Adrenal gland (tissue), 19 donors: ENCODE measurements at regions of chr17 and their contacts with region 1.

Region 1: DNA sequence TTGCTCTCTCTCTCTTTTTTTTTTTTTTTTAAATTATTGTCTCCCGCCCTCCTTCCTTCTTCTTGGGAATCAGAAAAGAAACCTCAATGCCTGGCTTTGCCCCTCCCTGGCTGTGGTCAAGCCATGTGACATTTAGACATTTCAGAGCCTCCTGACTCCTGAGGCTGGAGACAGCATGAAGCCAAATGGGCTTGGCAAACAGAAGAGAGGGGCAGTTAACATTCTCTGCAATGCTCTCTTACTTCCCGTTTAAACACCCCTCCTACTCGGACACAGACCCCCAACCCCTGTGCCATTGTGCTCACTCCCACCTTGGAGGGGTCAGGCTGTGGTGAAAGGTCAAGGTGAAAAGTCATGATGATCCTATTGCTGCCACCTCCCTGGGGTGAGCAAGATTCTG is 14.7 kb upstream of the MEOX1 start:
- DNase-seq: no peak
- H3K4me3 ChIP-seq: no peak overlapping the region
- H3K27ac ChIP-seq: no peak overlapping the region
- H3K4me1 ChIP-seq: peaks cover 19 to 34% of the 10 kb centered on the region in 2 donors
- H3K27me3 ChIP-seq: no peaks in the 10 kb centered on the region
- CTCF ChIP-seq: no peak
- POLR2A ChIP-seq: no peak

Region 2: DNA sequence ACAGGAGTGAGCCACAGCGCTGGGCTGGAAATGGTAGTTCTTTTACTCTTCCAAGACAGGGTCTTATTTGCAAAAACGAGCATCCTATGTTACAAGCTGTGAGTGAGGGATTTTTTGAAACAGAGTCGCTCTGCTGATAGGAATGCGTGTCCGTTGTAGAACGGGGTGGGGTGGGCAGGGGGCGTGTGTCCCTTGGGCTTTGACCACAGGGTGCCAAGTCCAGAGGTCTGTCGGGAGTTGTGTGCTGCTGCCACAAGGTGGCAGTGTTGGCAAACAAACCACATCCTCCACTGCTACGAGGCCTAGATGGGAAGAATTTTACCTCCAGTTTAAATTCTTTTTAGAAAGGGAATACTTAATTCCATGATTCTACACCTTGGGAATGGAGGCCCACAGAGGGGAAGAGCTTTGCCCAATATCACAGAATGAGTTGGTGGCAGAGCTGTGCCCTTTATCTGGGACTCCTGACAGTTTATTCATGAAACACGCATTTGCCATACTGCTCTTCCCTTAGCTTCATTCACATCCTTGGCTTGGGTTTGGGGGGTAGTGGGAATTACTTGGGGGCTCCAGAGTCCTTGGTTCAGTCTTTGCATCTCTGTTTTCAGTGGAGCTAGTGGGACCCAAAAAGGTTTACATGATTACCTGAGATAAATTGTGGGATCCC is 99.8 kb before region 1 on chr17:
- intact Hi-C with region 1: loop called (anchors 2 kb)
- DNase-seq: peak; percentile 56 to 84 (median 72)
- H3K4me3 ChIP-seq: no peak overlapping the region
- H3K27ac ChIP-seq: no peak overlapping the region
- H3K4me1 ChIP-seq: peaks cover 0 to 9% of the 10 kb centered on the region in 2 donors
- H3K27me3 ChIP-seq: no peaks in the 10 kb centered on the region
- CTCF ChIP-seq: peak; percentile 85 to 95 (median 92)
- POLR2A ChIP-seq: no peak

Region 3: DNA sequence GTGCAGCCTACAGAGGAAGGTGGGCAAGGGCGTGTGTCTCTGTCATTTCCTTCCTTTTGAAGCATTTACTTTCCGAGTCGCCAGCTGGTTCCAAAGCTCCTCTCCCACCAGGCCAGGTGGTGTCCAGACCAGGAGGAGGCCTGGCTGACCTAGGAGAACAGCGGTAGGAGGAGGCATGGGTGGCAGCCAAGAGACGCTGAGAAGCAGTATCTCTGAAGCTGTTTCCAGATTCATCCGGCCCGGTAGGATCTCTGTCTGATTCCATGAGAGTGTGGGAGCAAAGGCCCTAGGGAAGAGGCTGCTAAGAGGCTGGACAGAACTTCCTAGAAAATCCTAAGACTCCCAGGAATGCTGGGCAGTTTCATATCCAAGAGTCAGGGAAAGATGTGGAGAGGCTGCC is 35.1 kb before region 1 on chr17:
- intact Hi-C with region 1: no loop called
- DNase-seq: no peak
- H3K4me3 ChIP-seq: no peak overlapping the region
- H3K27ac ChIP-seq: no peak overlapping the region
- H3K4me1 ChIP-seq: peaks cover 0 to 6% of the 10 kb centered on the region in 2 donors
- H3K27me3 ChIP-seq: no peaks in the 10 kb centered on the region
- CTCF ChIP-seq: no peak
- POLR2A ChIP-seq: no peak